ENCODE measurements at regions of chr15 and their contacts with region 1.

Region 1: DNA sequence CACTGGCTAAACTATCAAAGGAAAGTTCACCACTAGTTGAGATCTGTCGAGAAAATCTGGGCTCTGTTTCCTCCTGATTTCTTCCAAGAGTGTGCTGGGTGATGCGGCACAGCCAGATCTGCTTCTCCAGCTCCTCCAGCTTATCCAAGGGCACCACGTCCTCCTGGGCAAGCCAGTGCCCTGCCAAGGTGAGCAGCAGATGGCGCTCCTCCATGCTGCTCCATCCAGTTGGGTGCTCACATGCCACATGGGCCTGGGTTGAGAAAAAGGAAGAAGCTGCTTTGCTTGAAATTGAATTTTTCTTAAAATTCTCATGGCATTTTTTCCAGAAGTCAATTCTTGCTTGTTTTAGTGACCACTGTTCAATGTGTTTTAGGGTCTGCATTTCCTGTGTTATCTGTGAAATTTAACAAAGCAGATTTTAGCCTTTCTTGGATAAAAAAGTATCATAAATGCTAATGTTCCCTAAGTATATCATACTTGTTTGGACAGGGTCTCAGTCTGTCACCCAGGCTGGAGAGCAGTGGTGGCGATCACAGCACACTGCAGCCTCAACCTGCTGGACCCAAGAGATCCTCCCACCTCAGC is 47.3 kb downstream of the EIF3J start:
- DNase-seq: peak; percentile 21 to 71 (median 35)
- H3K4me3 ChIP-seq: no peak overlapping the region
- H3K4me3 Mint-ChIP-seq: no peak overlapping the region
- H3K27ac ChIP-seq: no peak overlapping the region
- H3K27ac Mint-ChIP-seq: peak overlapping the region in 5 of 8 donors; percentile 7 to 92 (median 64)
- H3K4me1 ChIP-seq: peaks cover 3% of the 10 kb centered on the region
- H3K4me1 Mint-ChIP-seq: peaks cover 8 to 30% (median 19%) of the 10 kb centered on the region in 3 donors
- H3K27me3 ChIP-seq: no peaks in the 10 kb centered on the region
- H3K27me3 Mint-ChIP-seq: no peaks in the 10 kb centered on the region

Region 2: DNA sequence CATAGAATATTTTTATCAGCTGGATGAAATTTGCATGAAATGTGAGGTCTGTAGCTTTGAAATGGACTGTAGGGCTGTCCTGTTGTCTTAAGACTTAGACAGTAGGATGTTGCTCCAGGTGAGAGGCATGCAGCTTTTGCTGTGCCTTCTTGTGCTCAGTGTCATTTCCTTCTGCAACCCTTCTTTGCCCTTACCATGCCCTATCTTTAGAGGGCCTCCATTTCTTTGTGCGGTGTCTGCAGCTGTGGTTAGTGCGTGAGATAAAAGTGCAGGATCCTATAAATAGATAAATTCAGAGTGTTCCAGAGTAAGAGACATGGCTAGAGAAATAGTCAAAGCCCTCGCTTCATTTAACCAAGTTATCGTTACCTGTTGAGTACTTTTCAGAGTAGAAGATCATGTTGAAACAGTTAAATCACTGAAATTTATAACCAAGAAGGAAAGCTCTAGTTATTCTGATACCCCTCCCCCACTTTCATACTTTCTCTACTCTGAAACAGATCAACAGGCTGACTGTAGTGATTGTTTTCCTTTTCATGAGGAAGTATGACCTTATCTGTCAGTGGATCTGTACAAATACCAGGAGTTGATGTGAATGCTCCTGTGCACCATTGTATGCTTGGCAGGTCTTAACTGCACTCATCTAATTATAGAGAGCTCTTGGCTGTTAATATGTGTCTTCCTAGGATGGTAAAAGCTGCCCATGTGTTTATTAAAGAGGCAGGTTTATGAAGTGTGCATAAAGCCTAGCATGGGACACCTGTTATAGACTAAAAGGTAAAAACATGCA is 29.1 kb before region 1 on chr15:
- CTCF ChIA-PET with region 1: interaction called, 3 read pairs
- POLR2A ChIA-PET with region 1: interaction called, 10 read pairs
- DNase-seq: no peak
- H3K4me3 ChIP-seq: no peak overlapping the region
- H3K4me3 Mint-ChIP-seq: no peak overlapping the region
- H3K27ac ChIP-seq: no peak overlapping the region
- H3K27ac Mint-ChIP-seq: peak overlapping the region; percentile 21 to 79 (median 50)
- H3K4me1 ChIP-seq: peaks cover 25% of the 10 kb centered on the region
- H3K4me1 Mint-ChIP-seq: peaks cover 28 to 47% (median 38%) of the 10 kb centered on the region in 3 donors
- H3K27me3 ChIP-seq: no peaks in the 10 kb centered on the region
- H3K27me3 Mint-ChIP-seq: no peaks in the 10 kb centered on the region

Measured in CD8-positive, alpha-beta memory T cell (primary cell).